ENCODE measurements at regions of chr21 and their contacts with region 1.

Region 1: GRCh38 chr21:46323227-46324128 is at the start of gene C21orf58:
- DNase-seq: peak; percentile 98
- H3K4me3 ChIP-seq: peak within 1 kb of the TSS; percentile 86
- H3K27ac ChIP-seq: peak within 1 kb of the TSS; percentile 88
- H3K4me1 ChIP-seq: peaks cover 30% of the 10 kb centered on the region
- CTCF ChIP-seq: no peak
- total RNA-seq, gene C21orf58: 102 and 112 TPM in 2 replicates

Region 2: GRCh38 chr21:46285761-46286496 is 37.5 kb before region 1 on chr21 and contains the start of gene YBEY:
- CTCF ChIA-PET with region 1: no interaction called
- POLR2A ChIA-PET with region 1: no interaction called
- intact Hi-C with region 1: loop called (anchors 1 kb)
- DNase-seq: peak; percentile 92
- H3K4me3 ChIP-seq: peak within 1 kb of the TSS; percentile 78
- H3K27ac ChIP-seq: peak within 1 kb of the TSS; percentile 78
- H3K4me1 ChIP-seq: peaks cover 45% of the 10 kb centered on the region
- CTCF ChIP-seq: peak; percentile 60
- total RNA-seq, gene YBEY: 18.3 and 24.5 TPM in 2 replicates

Region 3: DNA sequence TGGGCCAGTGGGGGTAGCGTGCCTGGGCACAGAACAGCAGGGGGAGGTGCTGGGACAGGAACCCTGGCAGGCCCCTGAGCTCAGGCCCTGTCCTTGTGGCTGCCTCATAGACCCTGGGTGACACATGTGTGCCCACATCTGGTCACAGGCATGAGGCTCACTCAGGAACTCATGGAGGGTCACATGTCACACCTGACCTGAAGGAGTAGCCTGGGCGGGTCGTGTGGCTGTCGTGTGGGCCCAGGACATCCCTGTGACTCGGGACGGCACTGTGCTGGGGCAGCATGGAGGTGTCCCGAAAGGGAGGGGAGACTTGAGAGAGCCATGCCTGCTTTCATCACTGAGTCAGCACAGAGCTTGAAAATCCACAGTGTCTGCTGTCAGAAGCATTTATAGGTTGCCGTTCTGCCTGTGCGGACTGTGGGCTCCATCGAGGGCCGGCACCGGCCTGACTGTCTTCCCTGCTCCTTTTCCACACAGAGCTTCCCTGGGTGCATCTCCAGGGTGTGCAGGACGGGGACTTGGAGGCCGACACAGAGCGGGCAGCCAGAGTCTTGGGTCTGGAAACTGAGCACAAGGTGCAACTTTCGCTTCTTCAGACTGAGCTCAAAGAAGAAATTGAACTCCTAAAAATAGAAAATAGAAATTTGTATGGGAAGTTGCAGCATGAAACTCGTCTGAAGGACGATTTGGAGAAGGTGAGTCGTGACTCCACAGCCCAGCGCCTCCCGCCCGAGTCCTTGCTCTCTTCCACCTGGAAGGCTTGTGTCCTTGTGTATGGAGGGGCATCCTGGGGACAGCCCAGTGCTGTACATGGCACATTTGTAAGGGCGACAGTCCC is 33.2 kb after region 1 on chr21:
- CTCF ChIA-PET with region 1: no interaction called
- POLR2A ChIA-PET with region 1: interaction called, 5 read pairs
- intact Hi-C with region 1: loop called (anchors 2 kb)
- DNase-seq: peak; percentile 77
- H3K4me3 ChIP-seq: peak overlapping the region; percentile 57
- H3K27ac ChIP-seq: peak overlapping the region; percentile 97
- H3K4me1 ChIP-seq: peaks cover 29% of the 10 kb centered on the region
- CTCF ChIP-seq: 0 out of 2 replicates have a peak, but pooled peaks have one; percentile 19

Region 4: GRCh38 chr21:46458315-46459023 is 135.0 kb after region 1 on chr21 and contains the start of gene DIP2A:
- CTCF ChIA-PET with region 1: no interaction called
- POLR2A ChIA-PET with region 1: no interaction called
- intact Hi-C with region 1: loop called (anchors 1 kb)
- DNase-seq: peak; percentile 98
- H3K4me3 ChIP-seq: peak within 1 kb of the TSS; percentile 89
- H3K27ac ChIP-seq: peak within 1 kb of the TSS; percentile 66
- H3K4me1 ChIP-seq: peaks cover 19% of the 10 kb centered on the region
- CTCF ChIP-seq: no peak
- total RNA-seq, gene DIP2A: 27.9 and 30.2 TPM in 2 replicates

Measured in OCI-LY7 (cell line).